Endothelial cell of umbilical vein (primary cell): ENCODE measurements at regions of chr4 and their contacts with region 1.

Region 1: GRCh38 chr4:183541010-183541751 is 36.3 kb downstream of the ING2 start:
- DNase-seq: no peak
- H3K4me3 ChIP-seq: no peak overlapping the region
- H3K27ac ChIP-seq: no peak overlapping the region
- H3K4me1 ChIP-seq: no peaks in the 10 kb centered on the region
- H3K27me3 ChIP-seq: peaks cover 1 to 3% of the 10 kb centered on the region in 2 experiments
- CTCF ChIP-seq: no peak
- POLR2A ChIP-seq: no peak

Region 2: DNA sequence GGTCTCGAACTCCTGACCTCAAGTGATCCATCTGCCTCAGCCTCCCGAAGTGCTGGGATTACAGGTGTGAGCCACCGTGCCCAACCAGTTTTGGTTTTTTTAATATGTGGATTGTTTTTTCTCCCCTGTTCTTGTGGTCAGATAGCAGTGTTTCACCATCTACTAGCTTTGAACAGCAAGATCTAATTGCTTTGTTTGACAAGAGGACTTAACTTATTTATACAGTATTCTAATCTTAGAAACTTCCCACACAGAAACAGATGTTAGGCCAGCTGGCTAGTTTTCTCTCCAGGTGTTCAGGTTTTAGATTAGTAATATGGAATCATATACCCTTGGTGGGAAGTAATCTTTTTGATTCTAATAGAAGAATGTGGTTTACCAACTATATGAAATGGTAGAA is 23.4 kb before region 1 on chr4:
- CTCF ChIA-PET with region 1: no interaction called
- POLR2A ChIA-PET with region 1: interaction called, 11 read pairs
- dilution Hi-C with region 1: no loop called
- intact Hi-C with region 1: no loop called
- DNase-seq: no peak
- H3K4me3 ChIP-seq: no peak overlapping the region
- H3K27ac ChIP-seq: no peak overlapping the region
- H3K4me1 ChIP-seq: no peaks in the 10 kb centered on the region
- H3K27me3 ChIP-seq: no peaks in the 10 kb centered on the region
- CTCF ChIP-seq: no peak
- POLR2A ChIP-seq: no peak

Region 3: DNA sequence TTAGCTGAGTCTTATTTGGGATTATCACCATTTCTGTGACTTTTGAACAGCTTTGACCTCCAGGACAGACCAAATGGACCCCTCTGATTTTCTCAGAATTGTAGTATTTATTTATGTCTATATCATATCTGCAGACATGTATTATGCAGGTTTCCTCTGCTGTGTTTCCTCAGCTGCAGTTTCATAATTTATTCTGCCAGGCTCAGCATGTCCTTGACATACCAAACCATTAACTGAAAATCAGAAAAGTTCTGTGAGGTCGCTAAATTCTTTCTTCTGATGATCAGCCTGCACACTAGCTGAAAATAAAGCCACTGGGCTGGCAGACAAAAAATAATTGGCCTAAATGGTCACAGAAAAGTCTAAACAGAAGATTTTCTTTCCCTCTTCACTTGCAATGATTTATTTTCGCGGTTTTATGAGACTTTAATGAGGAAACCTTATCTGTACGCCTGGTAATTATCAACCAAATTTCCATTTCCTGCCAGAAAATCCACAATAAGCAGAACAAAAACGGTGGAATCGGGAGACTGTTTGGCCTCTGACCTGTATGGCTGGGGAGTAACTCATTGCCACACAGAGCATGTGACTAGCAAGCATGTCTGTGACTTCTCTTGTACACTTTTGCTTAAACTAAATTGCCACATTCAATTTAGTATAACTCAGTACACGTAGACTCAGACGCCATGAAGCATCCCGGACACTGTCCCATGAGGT is 525.6 kb after region 1 on chr4:
- CTCF ChIA-PET with region 1: no interaction called
- POLR2A ChIA-PET with region 1: no interaction called
- dilution Hi-C with region 1: no loop called
- intact Hi-C with region 1: no loop called
- DNase-seq: no peak
- H3K4me3 ChIP-seq: no peak overlapping the region
- H3K27ac ChIP-seq: no peak overlapping the region
- H3K4me1 ChIP-seq: no peaks in the 10 kb centered on the region
- H3K27me3 ChIP-seq: no peaks in the 10 kb centered on the region
- CTCF ChIP-seq: no peak
- POLR2A ChIP-seq: no peak